CD8-positive, alpha-beta T cell (primary cell): ENCODE measurements at regions of chr16 and their contacts with region 1.

Region 1: GRCh38 chr16:46947900-46948547 is 25.4 kb downstream of the DNAJA2 start:
- DNase-seq: peak in 4 of 9 experiments; percentile 24 to 63 (median 44)
- ATAC-seq: peak; percentile 72
- H3K4me3 ChIP-seq: no peak overlapping the region
- H3K4me3 Mint-ChIP-seq: no peak overlapping the region
- H3K27ac ChIP-seq: no peak overlapping the region
- H3K27ac Mint-ChIP-seq: no peak overlapping the region
- H3K4me1 ChIP-seq: no peaks in the 10 kb centered on the region
- H3K4me1 Mint-ChIP-seq: peaks cover 1% of the 10 kb centered on the region
- H3K27me3 ChIP-seq: no peaks in the 10 kb centered on the region
- H3K27me3 Mint-ChIP-seq: no peaks in the 10 kb centered on the region
- CTCF ChIP-seq: peak; percentile 71

Region 2: GRCh38 chr16:46709469-46710005 is 238.5 kb before region 1 on chr16:
- CTCF ChIA-PET with region 1: no interaction called
- POLR2A ChIA-PET with region 1: no interaction called
- intact Hi-C with region 1: no loop called
- DNase-seq: no peak
- ATAC-seq: no peak
- H3K4me3 ChIP-seq: no peak overlapping the region
- H3K4me3 Mint-ChIP-seq: no peak overlapping the region
- H3K27ac ChIP-seq: no peak overlapping the region
- H3K27ac Mint-ChIP-seq: no peak overlapping the region
- H3K4me1 ChIP-seq: no peaks in the 10 kb centered on the region
- H3K4me1 Mint-ChIP-seq: no peaks in the 10 kb centered on the region
- H3K27me3 ChIP-seq: no peaks in the 10 kb centered on the region
- H3K27me3 Mint-ChIP-seq: no peaks in the 10 kb centered on the region
- CTCF ChIP-seq: no peak

Region 3: GRCh38 chr16:46896314-46896968 is 51.6 kb before region 1 on chr16:
- CTCF ChIA-PET with region 1: no interaction called
- POLR2A ChIA-PET with region 1: no interaction called
- intact Hi-C with region 1: no loop called
- DNase-seq: no peak
- ATAC-seq: no peak
- H3K4me3 ChIP-seq: no peak overlapping the region
- H3K4me3 Mint-ChIP-seq: no peak overlapping the region
- H3K27ac ChIP-seq: no peak overlapping the region
- H3K27ac Mint-ChIP-seq: no peak overlapping the region
- H3K4me1 ChIP-seq: no peaks in the 10 kb centered on the region
- H3K4me1 Mint-ChIP-seq: peaks cover 2% of the 10 kb centered on the region
- H3K27me3 ChIP-seq: no peaks in the 10 kb centered on the region
- H3K27me3 Mint-ChIP-seq: no peaks in the 10 kb centered on the region
- CTCF ChIP-seq: no peak

Region 4: GRCh38 chr16:47018223-47018891 is 70.3 kb after region 1 on chr16:
- CTCF ChIA-PET with region 1: no interaction called
- POLR2A ChIA-PET with region 1: no interaction called
- intact Hi-C with region 1: loop called (anchors 5 kb)
- DNase-seq: peak in 5 of 9 experiments; percentile 18 to 63 (median 37)
- ATAC-seq: peak; percentile 78
- H3K4me3 ChIP-seq: no peak overlapping the region
- H3K4me3 Mint-ChIP-seq: no peak overlapping the region
- H3K27ac ChIP-seq: no peak overlapping the region
- H3K27ac Mint-ChIP-seq: no peak overlapping the region
- H3K4me1 ChIP-seq: peaks cover 11% of the 10 kb centered on the region
- H3K4me1 Mint-ChIP-seq: peaks cover 13% of the 10 kb centered on the region
- H3K27me3 ChIP-seq: peaks cover 0 to 3% of the 10 kb centered on the region in 2 experiments
- H3K27me3 Mint-ChIP-seq: no peaks in the 10 kb centered on the region
- CTCF ChIP-seq: no peak

Region 5: GRCh38 chr16:47037746-47038458 is 89.9 kb after region 1 on chr16:
- CTCF ChIA-PET with region 1: interaction called, 4 read pairs
- POLR2A ChIA-PET with region 1: no interaction called
- intact Hi-C with region 1: loop called (anchors 1 to 5 kb)
- DNase-seq: peak; percentile 80 to 95 (median 88)
- ATAC-seq: peak; percentile 98
- H3K4me3 ChIP-seq: peak overlapping the region; percentile 65 to 72
- H3K4me3 Mint-ChIP-seq: peak overlapping the region; percentile 79
- H3K27ac ChIP-seq: no peak overlapping the region
- H3K27ac Mint-ChIP-seq: no peak overlapping the region
- H3K4me1 ChIP-seq: peaks cover 7% of the 10 kb centered on the region
- H3K4me1 Mint-ChIP-seq: peaks cover 5% of the 10 kb centered on the region
- H3K27me3 ChIP-seq: peaks cover 0 to 12% of the 10 kb centered on the region in 2 experiments
- H3K27me3 Mint-ChIP-seq: peaks cover 3% of the 10 kb centered on the region
- CTCF ChIP-seq: peak; percentile 88

Region 6: DNA sequence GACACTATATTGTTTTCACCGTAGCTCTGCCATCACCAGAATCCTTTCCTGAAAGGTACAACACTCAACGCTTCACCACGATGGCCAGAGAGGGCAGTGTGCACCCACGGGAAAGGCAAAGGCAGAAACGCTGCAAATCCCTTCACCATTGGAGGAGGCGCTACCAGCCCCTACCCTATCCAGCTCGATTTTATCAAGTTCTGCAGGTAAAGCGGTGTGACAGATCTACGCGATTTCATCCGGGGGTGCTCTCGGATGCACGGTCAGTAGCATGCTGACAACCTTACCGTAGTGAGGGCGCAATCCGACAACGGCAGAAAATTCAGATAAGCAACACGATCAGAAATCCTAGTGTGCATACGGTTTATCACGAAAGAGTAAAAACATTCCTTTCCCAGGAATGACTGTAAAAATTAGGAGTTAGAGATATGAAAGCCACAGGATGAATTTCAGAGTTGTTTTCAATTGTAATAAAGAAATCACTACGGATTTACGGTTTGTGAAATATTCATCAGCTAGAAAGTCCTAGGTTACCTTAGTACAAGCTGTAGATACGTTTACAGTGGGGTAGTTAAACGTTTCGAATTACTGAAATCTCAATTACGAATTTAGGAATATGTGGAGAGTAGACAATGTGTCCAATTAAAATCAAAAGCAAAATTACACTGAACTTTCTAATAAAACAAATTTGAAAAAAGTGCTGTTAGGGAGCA is 193.9 kb after region 1 on chr16:
- CTCF ChIA-PET with region 1: interaction called, 5 read pairs
- POLR2A ChIA-PET with region 1: no interaction called
- intact Hi-C with region 1: loop called in 1 of 2 experiments (anchors 5 kb)
- DNase-seq: peak; percentile 63 to 87 (median 80)
- ATAC-seq: peak; percentile 77
- H3K4me3 ChIP-seq: peak overlapping the region; percentile 3 to 28
- H3K4me3 Mint-ChIP-seq: peak overlapping the region; percentile 76
- H3K27ac ChIP-seq: no peak overlapping the region
- H3K27ac Mint-ChIP-seq: no peak overlapping the region
- H3K4me1 ChIP-seq: peaks cover 12% of the 10 kb centered on the region
- H3K4me1 Mint-ChIP-seq: peaks cover 21% of the 10 kb centered on the region
- H3K27me3 ChIP-seq: peaks cover 3 to 5% of the 10 kb centered on the region in 2 experiments
- H3K27me3 Mint-ChIP-seq: peaks cover 22% of the 10 kb centered on the region
- CTCF ChIP-seq: peak; percentile 85